ENCODE measurements at regions of chr11 and their contacts with region 1.

Region 1: GRCh38 chr11:126310228-126310991 is 6.5 kb downstream of the DCPS start:
- DNase-seq: peak; percentile 87
- ATAC-seq: peak; percentile 82
- H3K4me3 ChIP-seq: no peak overlapping the region
- H3K27ac ChIP-seq: peak overlapping the region; percentile 23
- H3K4me1 ChIP-seq: peaks cover 29% of the 10 kb centered on the region
- H3K27me3 ChIP-seq: no peaks in the 10 kb centered on the region
- CTCF ChIP-seq: peak; percentile 98

Region 2: GRCh38 chr11:126246636-126247035 is 63.8 kb before region 1 on chr11:
- CTCF ChIA-PET with region 1: no interaction called
- POLR2A ChIA-PET with region 1: no interaction called
- intact Hi-C with region 1: no loop called
- DNase-seq: no peak
- ATAC-seq: no peak
- H3K4me3 ChIP-seq: no peak overlapping the region
- H3K27ac ChIP-seq: no peak overlapping the region
- H3K4me1 ChIP-seq: no peaks in the 10 kb centered on the region
- H3K27me3 ChIP-seq: no peaks in the 10 kb centered on the region
- CTCF ChIP-seq: no peak

Region 3: GRCh38 chr11:126355324-126355925 is 45.0 kb after region 1 on chr11 and contains the start of gene ST3GAL4:
- CTCF ChIA-PET with region 1: interaction called, 3 read pairs
- POLR2A ChIA-PET with region 1: no interaction called
- intact Hi-C with region 1: loop called (anchors 5 kb)
- DNase-seq: peak; percentile 83
- ATAC-seq: peak; percentile 64
- H3K4me3 ChIP-seq: peak within 1 kb of the TSS; percentile 83
- H3K27ac ChIP-seq: peak within 1 kb of the TSS; percentile 78
- H3K4me1 ChIP-seq: peaks cover 62% of the 10 kb centered on the region
- H3K27me3 ChIP-seq: no peaks in the 10 kb centered on the region
- CTCF ChIP-seq: no peak
- total RNA-seq, gene ST3GAL4: 126 and 148 TPM in 2 replicates

Region 4: GRCh38 chr11:126416542-126417090 is 106.2 kb after region 1 on chr11:
- CTCF ChIA-PET with region 1: no interaction called
- POLR2A ChIA-PET with region 1: no interaction called
- intact Hi-C with region 1: no loop called
- DNase-seq: no peak
- ATAC-seq: peak; percentile 42
- H3K4me3 ChIP-seq: no peak overlapping the region
- H3K27ac ChIP-seq: peak overlapping the region; percentile 35
- H3K4me1 ChIP-seq: peaks cover 6% of the 10 kb centered on the region; the same call in 1 of the 2 replicates
- H3K27me3 ChIP-seq: no peaks in the 10 kb centered on the region
- CTCF ChIP-seq: no peak

Region 5: DNA sequence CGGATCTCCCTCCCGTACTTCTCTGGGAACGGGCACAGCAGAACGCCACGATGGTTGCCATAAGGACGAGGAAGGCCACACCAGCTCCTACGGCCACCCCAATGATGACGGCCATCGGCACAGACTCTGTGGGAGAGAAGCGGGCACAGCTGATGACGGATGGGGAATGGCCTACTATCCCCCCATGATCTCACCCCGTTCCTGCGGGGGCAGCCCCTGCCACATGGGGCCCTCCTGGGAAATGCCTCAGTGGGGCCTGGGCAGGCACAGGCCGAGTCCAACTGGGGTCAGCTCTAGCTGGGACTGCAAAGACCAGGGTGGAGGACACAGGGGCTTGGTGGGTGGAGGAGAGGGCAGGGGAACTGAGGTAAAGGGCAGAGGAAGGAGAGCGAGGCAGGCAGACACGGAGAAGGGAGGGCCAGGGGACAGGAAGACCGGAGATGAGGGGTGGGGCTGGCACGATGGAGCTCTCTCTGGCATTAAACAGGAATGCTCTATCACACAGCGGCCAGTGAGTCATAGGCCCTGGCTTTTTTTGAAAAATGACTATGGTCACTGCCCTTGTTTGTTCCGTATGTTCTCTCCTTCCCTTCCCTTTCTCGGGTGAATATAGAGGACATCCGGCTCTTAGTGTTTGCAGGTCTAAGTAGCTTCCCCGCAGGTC is 121.1 kb after region 1 on chr11:
- CTCF ChIA-PET with region 1: interaction called, 4 read pairs
- POLR2A ChIA-PET with region 1: no interaction called
- intact Hi-C with region 1: loop called (anchors 2 kb)
- DNase-seq: peak; percentile 98
- ATAC-seq: peak; percentile 86
- H3K4me3 ChIP-seq: no peak overlapping the region
- H3K27ac ChIP-seq: peak overlapping the region; percentile 93
- H3K4me1 ChIP-seq: peaks cover 25% of the 10 kb centered on the region
- H3K27me3 ChIP-seq: no peaks in the 10 kb centered on the region
- CTCF ChIP-seq: no peak

Region 6: DNA sequence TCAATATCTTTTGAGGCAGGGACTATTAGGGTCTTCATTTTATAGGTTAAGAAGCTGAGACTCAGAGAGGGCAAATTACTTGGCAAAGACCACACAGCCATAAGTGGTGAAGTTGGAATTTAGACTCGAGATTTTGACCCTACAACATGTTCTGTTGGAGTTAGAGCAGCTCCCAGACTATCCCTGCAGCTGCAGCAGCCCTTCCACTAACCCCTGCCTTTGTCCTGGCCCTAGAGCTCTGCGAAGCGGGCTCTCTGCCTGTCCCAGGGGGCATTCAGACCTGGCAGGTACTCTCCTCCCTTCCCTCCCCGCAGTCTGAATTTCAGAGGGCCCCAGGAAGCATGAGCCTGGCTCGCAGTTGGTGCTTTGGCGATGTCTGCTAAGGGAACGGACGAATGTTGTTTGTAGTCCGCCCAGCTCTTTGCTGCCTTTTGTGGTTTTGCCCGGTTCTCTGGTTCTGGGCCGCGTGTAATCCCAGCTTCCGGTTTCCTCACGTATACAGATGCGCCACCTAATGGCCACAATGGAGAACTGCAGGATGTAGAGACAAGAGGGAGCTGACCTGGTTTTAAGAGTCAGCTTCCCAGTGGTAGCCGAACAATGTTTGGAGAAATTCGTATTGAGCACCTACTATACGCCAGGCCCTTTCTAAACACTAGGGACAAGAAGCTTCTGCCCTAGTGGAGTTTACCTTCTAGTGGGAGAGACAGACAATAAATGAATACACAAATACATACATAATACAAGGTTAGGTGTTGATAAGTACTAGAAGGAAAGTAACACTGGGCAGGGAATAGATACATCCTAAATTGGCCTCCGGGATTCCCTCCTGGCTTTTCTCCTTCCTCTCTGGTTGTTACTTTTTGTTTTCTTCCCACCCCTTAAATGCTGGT is 170.2 kb after region 1 on chr11:
- CTCF ChIA-PET with region 1: interaction called, 25 read pairs
- POLR2A ChIA-PET with region 1: no interaction called
- intact Hi-C with region 1: loop called (anchors 1 kb)
- DNase-seq: peak; percentile 93
- ATAC-seq: peak; percentile 74
- H3K4me3 ChIP-seq: peak overlapping the region; percentile 30; the same call in 1 of the 2 replicates
- H3K27ac ChIP-seq: no peak overlapping the region
- H3K4me1 ChIP-seq: peaks cover 15% of the 10 kb centered on the region
- H3K27me3 ChIP-seq: no peaks in the 10 kb centered on the region
- CTCF ChIP-seq: peak; percentile 98

Region 7: DNA sequence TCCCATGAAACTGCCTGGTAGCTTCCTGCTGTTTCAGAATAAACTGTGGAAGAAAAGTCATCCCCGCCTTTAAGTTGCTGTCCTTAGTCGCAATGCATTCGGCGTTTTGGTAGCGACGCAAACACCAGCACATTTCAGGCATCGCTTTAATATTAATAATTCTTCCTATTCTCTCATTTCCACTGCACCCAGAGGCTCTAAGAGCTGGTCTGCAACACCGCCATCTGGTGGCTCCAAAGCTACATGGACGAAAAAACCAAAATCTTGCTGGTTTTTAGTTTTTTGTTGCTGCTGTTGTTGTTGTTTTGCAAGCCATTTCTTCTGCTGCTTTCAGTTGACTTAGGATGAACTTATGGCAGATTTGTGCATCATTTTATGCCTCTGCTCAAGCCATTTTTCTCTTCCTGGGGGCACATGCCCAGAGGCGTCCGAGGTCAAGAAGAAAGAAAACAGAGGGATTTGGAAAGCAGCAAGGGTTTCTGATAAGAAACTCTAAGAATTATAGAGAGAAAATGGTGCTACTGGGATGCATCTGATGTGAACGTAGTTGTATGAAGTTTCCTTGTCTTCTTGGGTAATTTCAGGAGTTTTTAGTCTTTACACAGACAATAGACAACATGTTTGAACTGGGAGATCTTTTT is 1035.5 kb after region 1 on chr11:
- CTCF ChIA-PET with region 1: no interaction called
- POLR2A ChIA-PET with region 1: no interaction called
- intact Hi-C with region 1: loop called (anchors 5 kb)
- DNase-seq: peak; percentile 64
- ATAC-seq: no peak
- H3K4me3 ChIP-seq: no peak overlapping the region
- H3K27ac ChIP-seq: no peak overlapping the region
- H3K4me1 ChIP-seq: no peaks in the 10 kb centered on the region
- H3K27me3 ChIP-seq: no peaks in the 10 kb centered on the region
- CTCF ChIP-seq: peak; percentile 84